ENCODE measurements at regions of chr6 and their contacts with region 1.

Region 1: GRCh38 chr6:123551939-123552707 is 84.6 kb downstream of the TRDN start:
- DNase-seq: no peak
- H3K4me3 ChIP-seq: no peak overlapping the region
- H3K4me3 Mint-ChIP-seq: no peak overlapping the region
- H3K27ac Mint-ChIP-seq: no peak overlapping the region
- H3K4me1 ChIP-seq: no peaks in the 10 kb centered on the region
- H3K4me1 Mint-ChIP-seq: no peaks in the 10 kb centered on the region
- H3K27me3 ChIP-seq: no peaks in the 10 kb centered on the region
- H3K27me3 Mint-ChIP-seq: peaks cover 6% of the 10 kb centered on the region
- CTCF ChIP-seq: no peak

Region 2: DNA sequence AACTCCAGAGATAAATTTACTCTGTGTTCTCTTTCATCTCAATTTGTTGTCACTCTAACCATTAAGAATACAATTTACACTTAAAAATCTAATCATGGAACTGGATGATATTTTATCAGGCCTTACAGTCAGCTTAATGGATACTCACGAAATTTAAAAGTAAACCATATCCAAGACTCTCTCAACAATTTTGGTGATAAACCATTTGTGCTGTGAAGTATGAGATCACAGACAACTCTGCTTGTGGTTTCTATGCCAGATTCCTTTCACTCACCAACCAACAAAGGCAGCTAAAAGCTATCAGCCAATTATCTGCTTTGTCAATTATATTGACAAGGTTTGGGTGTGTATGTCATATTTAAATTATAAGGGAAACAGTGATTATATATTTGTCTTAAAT is 71.1 kb before region 1 on chr6:
- CTCF ChIA-PET with region 1: no interaction called
- POLR2A ChIA-PET with region 1: no interaction called
- intact Hi-C with region 1: no loop called
- DNase-seq: no peak
- H3K4me3 ChIP-seq: no peak overlapping the region
- H3K4me3 Mint-ChIP-seq: no peak overlapping the region
- H3K27ac Mint-ChIP-seq: no peak overlapping the region
- H3K4me1 ChIP-seq: no peaks in the 10 kb centered on the region
- H3K4me1 Mint-ChIP-seq: no peaks in the 10 kb centered on the region
- H3K27me3 ChIP-seq: no peaks in the 10 kb centered on the region
- H3K27me3 Mint-ChIP-seq: no peaks in the 10 kb centered on the region
- CTCF ChIP-seq: no peak

Region 3: GRCh38 chr6:123592426-123592825 is 40.3 kb after region 1 on chr6:
- CTCF ChIA-PET with region 1: no interaction called
- POLR2A ChIA-PET with region 1: no interaction called
- intact Hi-C with region 1: loop called (anchors 2 kb)
- DNase-seq: no peak
- H3K4me3 ChIP-seq: no peak overlapping the region
- H3K4me3 Mint-ChIP-seq: no peak overlapping the region
- H3K27ac Mint-ChIP-seq: no peak overlapping the region
- H3K4me1 ChIP-seq: no peaks in the 10 kb centered on the region
- H3K4me1 Mint-ChIP-seq: no peaks in the 10 kb centered on the region
- H3K27me3 ChIP-seq: no peaks in the 10 kb centered on the region
- H3K27me3 Mint-ChIP-seq: peaks cover under 1% of the 10 kb centered on the region
- CTCF ChIP-seq: no peak

Measured in Caco-2 (cell line).